Right ventricle myocardium inferior (tissue), 1 donor: ENCODE measurements at regions of chr10 and their contacts with region 1.

Region 1: GRCh38 chr10:52779541-52780390 is 7.2 kb upstream of the MBL2 start:
- DNase-seq: no peak
- ATAC-seq: peak; percentile 72

Region 2: DNA sequence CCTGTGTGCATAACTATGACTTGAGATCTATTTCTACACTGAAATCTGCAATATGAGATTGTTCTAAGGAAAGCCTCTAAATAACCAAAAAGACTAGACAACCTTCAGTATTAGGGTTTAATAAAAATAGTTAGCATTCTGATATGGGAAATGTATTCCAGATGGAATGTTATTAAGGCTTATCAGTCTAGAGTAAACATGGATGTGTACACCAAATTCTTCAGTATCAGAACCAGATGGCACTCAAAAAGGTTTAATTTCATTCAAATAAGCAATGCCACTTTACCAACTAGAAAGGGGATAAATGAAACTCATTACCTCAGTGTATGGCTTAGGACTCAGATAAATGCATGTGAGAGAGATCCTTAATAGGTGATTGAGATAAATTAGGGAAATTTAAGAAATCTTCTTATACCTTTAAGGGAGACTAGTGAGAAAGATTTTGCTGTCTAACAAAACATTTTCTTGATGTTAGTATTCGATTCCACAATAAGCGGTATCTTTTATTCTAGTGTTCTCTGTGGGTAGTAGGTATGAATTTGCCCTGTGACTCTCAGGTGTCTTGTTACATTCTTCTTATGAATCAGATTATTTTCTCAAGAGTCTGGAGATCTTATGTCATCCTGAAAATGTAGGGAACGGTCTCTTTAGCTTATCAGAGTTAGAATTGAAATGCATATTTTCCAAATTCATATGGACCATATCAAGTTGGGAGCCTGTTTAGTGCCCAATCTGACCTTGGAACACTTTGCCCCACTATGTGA is 1546.2 kb before region 1 on chr10:
- intact Hi-C with region 1: no loop called
- DNase-seq: no peak
- ATAC-seq: no peak

Region 3: GRCh38 chr10:52644373-52645186 is 135.2 kb before region 1 on chr10:
- intact Hi-C with region 1: loop called (anchors 2 kb)
- DNase-seq: no peak
- ATAC-seq: no peak

Region 4: GRCh38 chr10:52740913-52741675 is 38.7 kb before region 1 on chr10:
- intact Hi-C with region 1: loop called (anchors 2 kb)
- DNase-seq: no peak
- ATAC-seq: no peak